ENCODE measurements at regions of chr12 and their contacts with region 1.

Region 1: GRCh38 chr12:110280779-110281548 is at the start of gene ATP2A2:
- DNase-seq: peak; percentile 92
- H3K4me3 Mint-ChIP-seq: peak within 1 kb of the TSS; percentile 90
- H3K27ac Mint-ChIP-seq: peak within 1 kb of the TSS; percentile 87
- H3K4me1 Mint-ChIP-seq: peaks cover 35% of the 10 kb centered on the region
- H3K27me3 Mint-ChIP-seq: no peaks in the 10 kb centered on the region
- total RNA-seq, gene ATP2A2: 144 to 152 TPM

Region 2: GRCh38 chr12:109880016-109880931 is 400.7 kb before region 1 on chr12 and contains the start of gene GLTP:
- CTCF ChIA-PET with region 1: no interaction called
- POLR2A ChIA-PET with region 1: no interaction called
- intact Hi-C with region 1: loop called (anchors 10 kb)
- DNase-seq: peak; percentile 91
- H3K4me3 Mint-ChIP-seq: peak within 1 kb of the TSS; percentile 94
- H3K27ac Mint-ChIP-seq: peak within 1 kb of the TSS; percentile 79
- H3K4me1 Mint-ChIP-seq: peaks cover 45% of the 10 kb centered on the region
- H3K27me3 Mint-ChIP-seq: no peaks in the 10 kb centered on the region
- total RNA-seq, gene GLTP: 20.9 to 21.1 TPM

Region 3: GRCh38 chr12:109899783-109900751 is 380.9 kb before region 1 on chr12 and contains the start of gene TCHP:
- CTCF ChIA-PET with region 1: no interaction called
- POLR2A ChIA-PET with region 1: no interaction called
- intact Hi-C with region 1: no loop called
- DNase-seq: peak; percentile 85
- H3K4me3 Mint-ChIP-seq: peak within 1 kb of the TSS; percentile 81
- H3K27ac Mint-ChIP-seq: peak within 1 kb of the TSS; percentile 86
- H3K4me1 Mint-ChIP-seq: peaks cover 22% of the 10 kb centered on the region
- H3K27me3 Mint-ChIP-seq: no peaks in the 10 kb centered on the region
- total RNA-seq, gene TCHP: 21.2 to 21.3 TPM

Region 4: GRCh38 chr12:110124184-110124995 is 156.6 kb before region 1 on chr12 and contains the start of gene IFT81:
- CTCF ChIA-PET with region 1: no interaction called
- POLR2A ChIA-PET with region 1: interaction called, 7 read pairs
- intact Hi-C with region 1: loop called (anchors 1 kb)
- DNase-seq: peak; percentile 97
- H3K4me3 Mint-ChIP-seq: peak within 1 kb of the TSS; percentile 87
- H3K27ac Mint-ChIP-seq: peak within 1 kb of the TSS; percentile 42
- H3K4me1 Mint-ChIP-seq: peaks cover 7% of the 10 kb centered on the region
- H3K27me3 Mint-ChIP-seq: peaks cover 2% of the 10 kb centered on the region
- total RNA-seq, gene IFT81: 2.9 to 3.4 TPM

Region 5: GRCh38 chr12:110312581-110313360 is 31.8 kb after region 1 on chr12:
- CTCF ChIA-PET with region 1: interaction called, 4 read pairs
- POLR2A ChIA-PET with region 1: interaction called, 7 read pairs
- intact Hi-C with region 1: loop called (anchors 1 kb)
- DNase-seq: peak; percentile 39
- H3K4me3 Mint-ChIP-seq: no peak overlapping the region
- H3K27ac Mint-ChIP-seq: peak overlapping the region; percentile 85
- H3K4me1 Mint-ChIP-seq: peaks cover 61% of the 10 kb centered on the region
- H3K27me3 Mint-ChIP-seq: no peaks in the 10 kb centered on the region

Region 6: GRCh38 chr12:112179916-112180315 is 1899.0 kb after region 1 on chr12:
- CTCF ChIA-PET with region 1: no interaction called
- POLR2A ChIA-PET with region 1: no interaction called
- intact Hi-C with region 1: no loop called
- DNase-seq: no peak
- H3K4me3 Mint-ChIP-seq: no peak overlapping the region
- H3K27ac Mint-ChIP-seq: no peak overlapping the region
- H3K4me1 Mint-ChIP-seq: peaks cover 20% of the 10 kb centered on the region
- H3K27me3 Mint-ChIP-seq: no peaks in the 10 kb centered on the region